ENCODE measurements at regions of chr22 and their contacts with region 1.

Region 1: GRCh38 chr22:40177738-40178416 is at the start of gene TNRC6B:
- DNase-seq: peak; percentile 60 to 94 (median 70)
- ATAC-seq: peak; percentile 83
- H3K4me3 ChIP-seq: peak within 1 kb of the TSS; percentile 68
- H3K27ac ChIP-seq: peak within 1 kb of the TSS; percentile 93
- H3K4me1 ChIP-seq: peaks cover 9 to 24% of the 10 kb centered on the region in 2 experiments; a peak in 4 of 5 replicates
- H3K27me3 ChIP-seq: no peaks in the 10 kb centered on the region
- CTCF ChIP-seq: 0 out of 6 replicates have a peak, but pooled peaks of 1 of the 3 experiments have one; percentile 4
- EP300 ChIP-seq: peak; percentile 63
- POLR2A ChIP-seq: peak; percentile 95
- RAD21 ChIP-seq: no peak
- polyA plus RNA-seq, gene TNRC6B: 0.96 to 14.7 TPM

Region 2: DNA sequence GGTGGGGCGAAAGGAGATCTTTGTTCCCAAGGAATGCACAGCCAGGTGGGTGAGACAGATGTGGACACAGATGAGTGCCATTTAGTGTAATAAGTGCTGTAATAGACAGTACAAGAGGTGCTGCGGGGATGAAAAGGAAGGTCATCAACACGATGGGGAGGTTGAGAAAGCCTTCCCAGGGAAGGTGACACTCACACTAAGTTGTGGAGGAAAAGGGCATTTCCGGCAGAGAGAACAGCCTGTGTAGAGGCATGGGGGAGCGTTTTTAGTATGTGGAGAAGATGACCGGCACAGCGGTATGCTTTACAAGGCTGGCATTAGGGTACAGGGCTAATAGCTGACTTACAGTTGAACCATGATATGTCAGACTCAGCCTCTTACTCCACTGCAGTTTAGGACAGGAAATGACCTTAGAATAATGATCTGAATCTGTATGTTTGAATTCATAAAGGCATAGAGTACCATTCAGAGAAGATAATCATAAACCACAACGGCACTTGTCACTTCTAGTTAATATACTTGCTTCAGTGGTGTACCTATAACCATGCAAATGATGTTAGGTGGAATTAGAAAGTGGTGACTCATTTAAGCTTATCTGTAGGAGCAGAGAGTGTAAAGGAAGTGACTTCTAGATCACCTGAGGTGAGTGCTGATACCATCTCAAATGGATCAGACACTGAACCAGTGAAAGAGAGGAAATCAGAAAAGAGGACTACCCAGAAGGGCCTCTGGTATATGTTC is 122.6 kb before region 1 on chr22:
- CTCF ChIA-PET with region 1: no interaction called
- POLR2A ChIA-PET with region 1: interaction called, 6 read pairs
- in situ Hi-C with region 1: no loop called
- intact Hi-C with region 1: loop called (anchors 5 kb)
- DNase-seq: peak; percentile 20 to 69 (median 34)
- ATAC-seq: peak; percentile 64
- H3K4me3 ChIP-seq: no peak overlapping the region
- H3K27ac ChIP-seq: peak overlapping the region; percentile 66
- H3K4me1 ChIP-seq: peaks cover 19 to 46% of the 10 kb centered on the region in 2 experiments
- H3K27me3 ChIP-seq: no peaks in the 10 kb centered on the region
- CTCF ChIP-seq: no peak
- EP300 ChIP-seq: peak; percentile 87
- POLR2A ChIP-seq: no peak
- RAD21 ChIP-seq: no peak

Region 3: DNA sequence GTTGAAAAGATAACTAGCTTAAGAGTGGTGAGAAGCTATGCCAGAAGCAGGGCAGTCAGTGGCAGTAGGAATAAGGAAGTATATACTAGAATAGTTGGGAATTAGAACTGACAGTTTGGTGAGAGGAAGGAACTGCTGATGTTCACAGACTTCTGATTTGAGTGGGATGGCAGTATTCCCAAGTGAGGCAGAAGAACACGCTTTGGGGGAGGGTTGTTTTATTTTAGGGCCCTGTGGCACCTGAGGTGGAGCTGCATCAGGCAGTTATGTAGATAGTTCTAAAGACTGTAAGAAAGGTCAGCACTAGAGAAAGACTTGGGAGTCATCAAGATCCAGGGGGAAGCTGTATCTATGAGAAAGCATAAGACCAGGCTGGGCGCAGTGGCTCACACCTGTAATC is 66.4 kb before region 1 on chr22:
- CTCF ChIA-PET with region 1: no interaction called
- POLR2A ChIA-PET with region 1: interaction called, 10 read pairs
- in situ Hi-C with region 1: no loop called
- intact Hi-C with region 1: no loop called
- DNase-seq: no peak
- ATAC-seq: no peak
- H3K4me3 ChIP-seq: no peak overlapping the region
- H3K27ac ChIP-seq: no peak overlapping the region
- H3K4me1 ChIP-seq: peaks cover 4 to 8% of the 10 kb centered on the region in 2 experiments; a peak in 3 of 5 replicates
- H3K27me3 ChIP-seq: no peaks in the 10 kb centered on the region
- CTCF ChIP-seq: no peak
- EP300 ChIP-seq: no peak
- POLR2A ChIP-seq: no peak
- RAD21 ChIP-seq: no peak

Region 4: GRCh38 chr22:40193429-40194421 is 15.8 kb after region 1 on chr22:
- CTCF ChIA-PET with region 1: no interaction called
- POLR2A ChIA-PET with region 1: interaction called, 58 read pairs
- in situ Hi-C with region 1: no loop called
- intact Hi-C with region 1: no loop called
- DNase-seq: peak in 1 of 4 experiments; percentile 52
- ATAC-seq: 0 out of 3 replicates have a peak, but pooled peaks have one; percentile 17
- H3K4me3 ChIP-seq: no peak overlapping the region
- H3K27ac ChIP-seq: no peak overlapping the region
- H3K4me1 ChIP-seq: peaks cover 29 to 50% of the 10 kb centered on the region in 2 experiments
- H3K27me3 ChIP-seq: no peaks in the 10 kb centered on the region
- CTCF ChIP-seq: peak; percentile 33 to 59 (median 54); a peak in 4 of 6 replicates
- EP300 ChIP-seq: no peak
- POLR2A ChIP-seq: no peak
- RAD21 ChIP-seq: peak; percentile 13 to 52; a peak in 3 of 4 replicates

Region 5: DNA sequence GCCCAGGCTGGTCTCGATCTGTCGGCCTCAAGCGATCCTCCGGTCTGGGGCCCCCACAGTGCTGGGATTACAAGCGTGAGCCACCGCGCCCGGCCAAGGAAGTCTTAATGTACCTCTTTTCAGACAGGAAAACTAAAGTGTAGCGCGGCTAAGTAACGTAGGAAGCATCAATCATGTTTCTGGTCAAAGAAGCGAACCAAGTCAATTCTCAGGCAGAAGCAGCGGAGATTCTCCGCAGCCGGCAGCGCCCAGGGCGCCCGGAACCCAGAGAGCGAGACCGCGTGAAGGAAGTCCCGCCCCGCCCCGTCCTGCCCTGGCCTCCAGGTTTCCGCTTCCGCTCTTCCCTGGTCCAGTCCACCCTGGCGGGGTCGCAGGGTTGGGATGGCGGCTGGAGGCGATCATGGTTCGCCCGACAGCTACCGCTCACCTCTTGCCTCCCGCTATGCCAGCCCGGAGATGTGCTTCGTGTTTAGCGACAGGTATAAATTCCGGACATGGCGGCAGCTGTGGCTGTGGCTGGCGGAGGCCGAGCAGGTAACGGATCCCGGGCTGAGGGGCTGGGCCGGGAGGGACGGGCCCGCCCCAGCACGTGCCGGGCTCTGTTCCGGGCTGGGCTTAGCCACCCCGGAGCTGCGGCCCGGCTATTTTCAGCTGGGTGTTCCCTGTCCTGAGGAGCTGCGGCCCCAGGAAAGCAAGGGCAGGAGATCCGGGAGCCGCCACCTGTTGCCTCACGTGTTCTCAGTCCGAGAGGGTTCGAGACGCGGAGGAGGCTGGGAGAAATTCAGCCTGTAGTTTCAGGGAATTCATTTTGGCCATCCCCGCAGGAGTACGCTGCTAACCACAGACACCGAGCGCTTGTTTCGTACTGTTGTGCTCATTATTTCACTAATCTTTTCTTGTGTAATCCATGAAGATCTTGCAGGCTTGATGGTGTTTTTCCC is 168.6 kb after region 1 on chr22 and contains the start of gene ADSL:
- CTCF ChIA-PET with region 1: no interaction called
- POLR2A ChIA-PET with region 1: no interaction called
- in situ Hi-C with region 1: no loop called
- intact Hi-C with region 1: loop called (anchors 5 kb)
- DNase-seq: peak; percentile 84 to 91 (median 86)
- ATAC-seq: peak; percentile 97
- H3K4me3 ChIP-seq: peak within 1 kb of the TSS; percentile 73
- H3K27ac ChIP-seq: peak within 1 kb of the TSS; percentile 76
- H3K4me1 ChIP-seq: peaks cover 5 to 11% of the 10 kb centered on the region in 2 experiments
- H3K27me3 ChIP-seq: no peaks in the 10 kb centered on the region
- CTCF ChIP-seq: peak in 2 of 3 experiments; percentile 2 to 11; a peak in 2 of 6 replicates
- EP300 ChIP-seq: no peak; the same call in 1 of the 2 replicates
- POLR2A ChIP-seq: peak; percentile 96
- RAD21 ChIP-seq: no peak
- polyA plus RNA-seq, gene ADSL: 278 to 322 TPM

Measured in K562 (cell line).